ENCODE measurements at regions of chr3 and their contacts with region 1.

Region 1: GRCh38 chr3:12706504-12707253 is 42.8 kb upstream of the RAF1 start:
- DNase-seq: peak; percentile 92
- ATAC-seq: peak; percentile 94
- H3K4me3 ChIP-seq: no peak overlapping the region
- H3K27ac ChIP-seq: no peak overlapping the region
- H3K4me1 ChIP-seq: peaks cover 18% of the 10 kb centered on the region
- H3K27me3 ChIP-seq: no peaks in the 10 kb centered on the region
- CTCF ChIP-seq: peak; percentile 96

Region 2: DNA sequence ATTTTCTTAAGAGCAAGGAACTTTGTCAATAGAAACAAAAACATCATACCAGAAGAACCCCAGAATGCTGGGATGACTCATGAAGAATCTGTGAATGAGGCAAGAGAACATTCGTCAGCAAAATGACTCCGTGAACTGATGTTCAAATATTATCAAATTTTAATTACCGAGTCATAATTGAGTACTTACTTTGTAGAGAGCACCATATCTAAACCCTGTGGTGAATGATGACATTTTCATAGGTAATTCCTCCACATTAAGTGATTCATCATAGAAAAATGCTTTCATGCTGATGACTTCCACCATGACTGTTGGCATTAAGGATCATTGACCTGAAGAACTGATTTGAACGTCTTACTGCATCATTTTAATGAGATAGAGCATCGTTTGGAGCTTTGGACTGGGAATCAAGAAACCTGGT is 361.5 kb before region 1 on chr3:
- CTCF ChIA-PET with region 1: no interaction called
- POLR2A ChIA-PET with region 1: no interaction called
- intact Hi-C with region 1: no loop called
- DNase-seq: peak; percentile 85
- ATAC-seq: peak; percentile 27
- H3K4me3 ChIP-seq: no peak overlapping the region
- H3K27ac ChIP-seq: peak overlapping the region; percentile 49
- H3K4me1 ChIP-seq: peaks cover 57% of the 10 kb centered on the region
- H3K27me3 ChIP-seq: no peaks in the 10 kb centered on the region
- CTCF ChIP-seq: no peak

Region 3: GRCh38 chr3:12810013-12810780 is 103.5 kb after region 1 on chr3:
- CTCF ChIA-PET with region 1: interaction called, 10 read pairs
- POLR2A ChIA-PET with region 1: no interaction called
- intact Hi-C with region 1: no loop called
- DNase-seq: peak; percentile 90
- ATAC-seq: peak; percentile 97
- H3K4me3 ChIP-seq: peak overlapping the region; percentile 70
- H3K27ac ChIP-seq: no peak overlapping the region
- H3K4me1 ChIP-seq: peaks cover 5% of the 10 kb centered on the region; the same call in 1 of the 2 replicates
- H3K27me3 ChIP-seq: no peaks in the 10 kb centered on the region
- CTCF ChIP-seq: peak; percentile 67

Region 4: GRCh38 chr3:12830785-12831156 is 124.1 kb after region 1 on chr3:
- CTCF ChIA-PET with region 1: no interaction called
- POLR2A ChIA-PET with region 1: no interaction called
- intact Hi-C with region 1: loop called (anchors 5 kb)
- DNase-seq: peak; percentile 34
- ATAC-seq: peak; percentile 0; the same call in 1 of the 2 replicates
- H3K4me3 ChIP-seq: peak overlapping the region; percentile 25; the same call in 1 of the 2 replicates
- H3K27ac ChIP-seq: peak overlapping the region; percentile 94
- H3K4me1 ChIP-seq: peaks cover 42% of the 10 kb centered on the region
- H3K27me3 ChIP-seq: no peaks in the 10 kb centered on the region
- CTCF ChIP-seq: 0 out of 2 replicates have a peak, but pooled peaks have one; percentile 18

Measured in PC-3 (cell line).